Dendritic cell treated with granulocyte-macrophage colony-stimulating factor and Interleukin-4, amounts not matched to agents 40 ng/mL and 50 ng/mL, for 4 days (primary cell): ENCODE measurements at regions of chr12 and their contacts with region 1.

Region 1: GRCh38 chr12:98593351-98594049 is at the start of gene SLC25A3:
- H3K4me3 Mint-ChIP-seq: peak within 1 kb of the TSS; percentile 95
- H3K27ac Mint-ChIP-seq: peak within 1 kb of the TSS; percentile 92
- H3K4me1 Mint-ChIP-seq: peaks cover 23% of the 10 kb centered on the region
- H3K27me3 Mint-ChIP-seq: no peaks in the 10 kb centered on the region

Region 2: GRCh38 chr12:98644711-98645402 is 51.4 kb after region 1 on chr12 and contains the starts of genes APAF1 and IKBIP:
- intact Hi-C with region 1: loop called (anchors 1 kb)
- H3K4me3 Mint-ChIP-seq: peak within 1 kb of the TSS; percentile 88
- H3K27ac Mint-ChIP-seq: peak within 1 kb of the TSS; percentile 90
- H3K4me1 Mint-ChIP-seq: peaks cover 30% of the 10 kb centered on the region
- H3K27me3 Mint-ChIP-seq: no peaks in the 10 kb centered on the region

Region 3: GRCh38 chr12:98669751-98670150 is 76.3 kb after region 1 on chr12:
- intact Hi-C with region 1: no loop called
- H3K4me3 Mint-ChIP-seq: no peak overlapping the region
- H3K27ac Mint-ChIP-seq: no peak overlapping the region
- H3K4me1 Mint-ChIP-seq: no peaks in the 10 kb centered on the region
- H3K27me3 Mint-ChIP-seq: no peaks in the 10 kb centered on the region